Activated naive CD4-positive, alpha-beta T cell treated with anti-CD3 and anti-CD28 coated beads for 36 hours (primary cell): ENCODE measurements at regions of chr9 and their contacts with region 1.

Region 1: DNA sequence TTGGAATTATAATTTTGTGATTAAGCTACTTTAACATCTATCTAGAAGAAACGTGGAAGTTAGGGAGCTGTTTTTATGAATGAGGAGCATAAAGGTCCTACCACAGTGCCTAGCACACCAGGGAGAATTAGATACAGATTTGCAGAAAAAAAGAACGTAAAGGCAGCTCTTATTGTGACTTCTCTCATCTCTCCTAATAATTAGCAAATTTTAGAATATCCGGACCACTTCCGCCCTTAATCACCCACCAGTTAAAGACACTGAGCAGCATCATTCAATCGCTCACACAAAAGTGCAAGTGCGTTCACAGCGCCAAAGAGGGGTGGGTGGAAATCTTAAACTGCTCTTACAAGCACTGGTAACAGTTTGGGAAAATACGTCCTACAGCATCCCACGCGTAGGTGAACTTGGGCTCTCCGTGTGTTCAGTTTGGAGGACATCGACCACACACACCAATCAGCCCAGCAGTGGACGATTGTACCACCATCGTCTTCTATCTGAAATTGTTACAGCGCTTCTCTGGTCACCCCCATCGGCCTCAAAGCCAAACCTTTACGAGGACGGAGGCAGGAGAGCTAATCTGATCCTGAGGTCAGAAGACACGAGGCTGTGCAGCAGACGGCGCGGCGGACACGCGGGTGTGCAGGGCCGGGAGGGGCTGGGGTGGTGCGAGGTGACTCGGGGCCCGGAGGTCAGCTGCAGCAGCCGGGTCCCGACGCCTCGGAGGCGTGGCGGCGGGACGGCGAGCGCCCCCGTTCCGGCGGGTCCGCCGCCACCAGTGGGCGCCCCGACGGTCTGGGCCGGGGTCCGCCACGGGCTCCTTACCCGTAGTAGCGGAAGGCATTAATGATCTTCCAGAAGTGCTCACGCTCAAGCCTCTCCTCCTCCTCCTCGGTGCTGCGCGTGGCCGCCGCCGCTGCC is 646 bp downstream of the CARNMT1 start:
- DNase-seq: peak; percentile 53
- H3K4me3 Mint-ChIP-seq: peak overlapping the region; percentile 99
- H3K27ac Mint-ChIP-seq: peak overlapping the region; percentile 96
- H3K4me1 Mint-ChIP-seq: peaks cover 32% of the 10 kb centered on the region
- H3K27me3 Mint-ChIP-seq: no peaks in the 10 kb centered on the region

Region 2: DNA sequence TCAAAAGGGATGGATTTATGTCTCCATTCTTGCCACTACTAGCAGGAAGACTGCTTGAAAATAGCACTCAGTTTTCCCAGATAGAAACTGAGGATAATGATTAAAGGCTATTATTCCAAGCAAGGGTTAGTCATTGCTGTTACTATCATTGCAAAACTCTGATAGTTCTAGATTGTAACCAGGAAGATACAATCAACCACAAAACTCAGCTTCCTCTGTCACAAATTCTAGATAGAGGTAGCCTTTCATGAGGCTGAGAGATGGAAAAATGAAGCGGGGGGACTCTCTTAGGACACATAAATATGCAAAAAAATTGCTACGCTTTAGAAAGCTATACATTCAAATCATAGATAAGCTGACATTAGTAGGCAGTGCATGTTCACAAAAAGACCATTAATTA is 1872.7 kb before region 1 on chr9:
- CTCF ChIA-PET with region 1: no interaction called
- intact Hi-C with region 1: loop called (anchors 5 kb)
- DNase-seq: no peak
- H3K4me3 Mint-ChIP-seq: peak overlapping the region; percentile 62
- H3K27ac Mint-ChIP-seq: peak overlapping the region; percentile 86
- H3K4me1 Mint-ChIP-seq: peaks cover 73% of the 10 kb centered on the region
- H3K27me3 Mint-ChIP-seq: no peaks in the 10 kb centered on the region

Region 3: GRCh38 chr9:74773886-74774479 is 253.5 kb before region 1 on chr9:
- CTCF ChIA-PET with region 1: interaction called, 10 read pairs
- intact Hi-C with region 1: loop called (anchors 1 kb)
- DNase-seq: peak; percentile 85
- H3K4me3 Mint-ChIP-seq: no peak overlapping the region
- H3K27ac Mint-ChIP-seq: no peak overlapping the region
- H3K4me1 Mint-ChIP-seq: peaks cover 14% of the 10 kb centered on the region
- H3K27me3 Mint-ChIP-seq: peaks cover 14% of the 10 kb centered on the region

Region 4: DNA sequence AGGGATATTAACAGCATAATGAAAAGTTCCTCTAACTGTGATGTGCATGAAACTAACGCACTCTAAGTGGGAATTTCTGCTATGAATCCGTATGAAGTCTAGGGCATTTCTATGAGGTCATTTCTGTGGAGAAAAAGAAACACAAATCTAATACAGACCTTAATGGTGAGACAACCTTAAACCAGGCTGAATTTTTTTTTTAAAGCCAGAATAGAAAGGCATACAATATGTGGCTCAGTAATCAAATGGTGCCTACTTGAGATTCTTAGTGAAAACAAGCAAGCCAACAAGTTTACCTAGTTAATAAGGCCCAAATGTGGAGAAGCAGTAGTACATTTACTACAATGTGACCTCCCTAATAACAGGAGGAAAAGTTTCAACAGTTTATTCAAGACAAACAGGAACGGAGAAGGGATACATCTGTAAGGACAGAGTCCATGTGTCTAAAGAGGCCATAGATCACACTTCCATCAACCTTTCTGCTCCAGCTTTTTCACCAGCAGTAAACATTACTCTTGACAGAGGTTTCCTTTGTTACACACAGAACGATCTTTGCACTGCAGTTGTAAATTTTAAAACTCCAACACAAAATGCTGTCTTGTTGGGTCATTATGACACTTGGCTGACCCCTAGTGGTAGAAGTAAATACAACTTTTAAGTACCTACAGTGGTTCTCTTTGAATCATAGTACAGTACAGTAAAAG is 25.6 kb before region 1 on chr9:
- CTCF ChIA-PET with region 1: interaction called, 13 read pairs
- intact Hi-C with region 1: loop called (anchors 1 kb)
- DNase-seq: no peak
- H3K4me3 Mint-ChIP-seq: no peak overlapping the region
- H3K27ac Mint-ChIP-seq: no peak overlapping the region
- H3K4me1 Mint-ChIP-seq: no peaks in the 10 kb centered on the region
- H3K27me3 Mint-ChIP-seq: no peaks in the 10 kb centered on the region

Region 5: DNA sequence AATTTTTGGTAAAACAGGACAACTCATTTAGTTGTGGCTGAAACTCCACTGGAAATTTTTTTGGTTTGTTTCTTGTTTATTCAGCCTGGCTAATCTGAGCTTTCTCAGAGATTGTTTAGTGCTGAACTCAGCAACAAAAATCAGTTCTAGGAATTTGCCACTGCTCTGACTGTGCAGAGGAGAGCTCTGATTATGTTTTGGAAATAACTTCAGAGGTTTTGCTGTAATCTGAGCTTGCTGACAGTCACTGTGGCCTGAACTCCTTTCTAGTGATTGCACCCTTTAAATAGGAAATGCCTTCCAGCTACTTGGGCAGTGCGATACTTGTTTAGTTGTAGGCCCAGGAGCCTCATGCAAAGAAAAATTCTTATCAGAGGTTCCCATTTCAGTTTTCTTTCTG is 121.1 kb after region 1 on chr9:
- CTCF ChIA-PET with region 1: interaction called, 5 read pairs
- intact Hi-C with region 1: loop called (anchors 2 kb)
- DNase-seq: peak; percentile 32
- H3K4me3 Mint-ChIP-seq: no peak overlapping the region
- H3K27ac Mint-ChIP-seq: peak overlapping the region; percentile 83
- H3K4me1 Mint-ChIP-seq: peaks cover 64% of the 10 kb centered on the region
- H3K27me3 Mint-ChIP-seq: no peaks in the 10 kb centered on the region

Region 6: GRCh38 chr9:76023715-76024195 is 996.3 kb after region 1 on chr9:
- CTCF ChIA-PET with region 1: no interaction called
- intact Hi-C with region 1: loop called (anchors 10 kb)
- DNase-seq: peak; percentile 64
- H3K4me3 Mint-ChIP-seq: peak overlapping the region; percentile 68
- H3K27ac Mint-ChIP-seq: peak overlapping the region; percentile 83
- H3K4me1 Mint-ChIP-seq: peaks cover 92% of the 10 kb centered on the region
- H3K27me3 Mint-ChIP-seq: no peaks in the 10 kb centered on the region